Sciatic nerve (tissue), 2 donors: ENCODE measurements at regions of chr10 and their contacts with region 1.

Region 1: DNA sequence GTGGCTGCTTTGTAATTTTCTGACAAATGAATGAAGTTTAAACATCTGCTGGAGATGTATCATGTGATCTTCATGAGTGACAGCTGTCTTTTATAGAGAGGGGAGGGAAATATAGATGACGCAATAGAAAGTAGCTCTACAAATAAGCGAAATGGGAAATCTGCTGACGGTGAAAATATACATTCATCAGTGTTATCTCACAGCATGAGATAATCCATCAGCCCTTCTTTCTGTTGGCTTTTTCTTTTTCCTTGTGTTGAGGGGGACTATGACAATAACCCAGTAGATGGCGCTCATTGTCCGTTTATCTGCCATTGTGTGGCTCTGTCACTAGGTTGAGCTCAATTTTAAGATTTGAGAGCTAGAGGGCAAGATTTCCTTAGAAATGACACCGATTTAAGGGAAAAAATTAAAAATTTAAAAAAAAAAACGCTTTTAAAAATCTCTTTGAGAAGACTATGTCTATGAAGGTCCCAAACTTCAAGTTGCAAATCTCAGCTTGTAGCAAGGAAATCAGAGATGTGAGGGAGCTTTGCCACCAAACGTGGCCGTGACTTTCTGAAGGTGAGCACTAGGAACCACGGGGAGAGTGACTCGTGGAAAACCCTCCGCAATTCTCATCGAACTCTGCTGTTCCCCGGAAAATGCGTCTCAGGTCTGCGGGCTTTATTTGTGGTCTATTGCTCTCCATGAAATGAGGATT is 114.6 kb upstream of the SFMBT2 start:
- DNase-seq: peak; percentile 75
- ATAC-seq: peak; percentile 87

Region 2: GRCh38 chr10:7054900-7055299 is 470.6 kb before region 1 on chr10:
- intact Hi-C with region 1: no loop called
- DNase-seq: no peak
- ATAC-seq: no peak

Region 3: GRCh38 chr10:7679256-7679655 is 153.8 kb after region 1 on chr10:
- intact Hi-C with region 1: loop called (anchors 1 kb)
- DNase-seq: no peak
- ATAC-seq: no peak

Region 4: DNA sequence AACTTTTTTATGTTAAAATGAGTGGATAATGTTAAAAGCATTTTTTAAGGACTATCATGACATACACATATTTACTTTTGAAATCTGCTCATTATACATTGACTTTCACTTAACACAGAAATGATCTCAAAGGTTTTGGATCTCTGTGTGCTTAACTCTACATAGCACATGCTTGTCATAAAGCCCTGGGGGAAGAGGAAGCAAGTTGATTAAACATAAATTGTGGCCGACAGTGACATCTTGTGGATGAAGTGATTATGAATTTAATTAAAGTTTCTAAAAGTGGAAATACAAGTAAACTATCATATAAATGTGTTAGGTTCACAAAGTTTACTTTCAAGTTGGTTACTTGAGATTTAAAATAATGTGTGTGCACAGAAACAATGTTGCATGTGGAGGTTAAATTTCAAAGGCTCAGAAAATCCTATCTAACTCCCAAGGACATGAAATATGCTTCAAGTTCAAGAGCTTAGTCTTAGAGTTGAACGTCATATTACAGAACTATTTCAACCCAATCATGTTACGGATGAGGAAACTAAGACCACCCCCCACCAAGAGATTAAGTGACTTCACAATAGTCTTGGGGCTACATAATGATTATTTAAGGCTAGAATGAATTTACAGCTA is 1776.8 kb after region 1 on chr10:
- intact Hi-C with region 1: loop called (anchors 10 kb)
- DNase-seq: no peak
- ATAC-seq: no peak